Heart left ventricle (tissue), 16 donors: ENCODE measurements at regions of chr9 and their contacts with region 1.

Region 1: GRCh38 chr9:136679431-136679941 is 7.8 kb downstream of the AGPAT2 start:
- DNase-seq: peak in 2 of 5 donors; percentile 72 to 73
- ATAC-seq: peak; percentile 12 to 20 (median 16)
- H3K4me3 ChIP-seq: no peak overlapping the region
- H3K27ac ChIP-seq: peak overlapping the region in 7 of 12 donors; percentile 5 to 84 (median 35)
- H3K4me1 ChIP-seq: peaks cover 0 to 52% (median 25%) of the 10 kb centered on the region in 12 donors
- H3K27me3 ChIP-seq: no peaks in the 10 kb centered on the region
- CTCF ChIP-seq: no peak
- POLR2A ChIP-seq: no peak

Region 2: GRCh38 chr9:136711751-136712689 is 32.5 kb after region 1 on chr9 and contains the start of gene DIPK1B:
- intact Hi-C with region 1: loop called in 1 of 10 experiments (anchors 5 kb)
- DNase-seq: peak in 1 of 5 donors; percentile 23
- ATAC-seq: peak in 2 of 4 donors; percentile 3 to 6
- H3K4me3 ChIP-seq: peak within 1 kb of the TSS; percentile 59 to 91 (median 76)
- H3K27ac ChIP-seq: peak within 1 kb of the TSS in 11 of 12 donors; percentile 74 to 91 (median 86)
- H3K4me1 ChIP-seq: peaks cover 4 to 43% (median 34%) of the 10 kb centered on the region in 12 donors
- H3K27me3 ChIP-seq: peaks cover 0 to 23% (median 0%) of the 10 kb centered on the region in 9 donors
- CTCF ChIP-seq: no peak
- POLR2A ChIP-seq: no peak
- total RNA-seq, gene DIPK1B: 14.4 to 46.3 (median 19.8) TPM